CD4-positive, alpha-beta memory T cell (primary cell): ENCODE measurements at regions of chr3 and their contacts with region 1.

Region 1: GRCh38 chr3:130892759-130893375 is 1.0 kb upstream of the ATP2C1 start:
- DNase-seq: peak; percentile 75 to 80 (median 76)
- H3K4me3 ChIP-seq: peak overlapping the region; percentile 79 to 99
- H3K4me3 Mint-ChIP-seq: peak overlapping the region; percentile 95 to 99 (median 98)
- H3K27ac ChIP-seq: peak overlapping the region; percentile 99
- H3K27ac Mint-ChIP-seq: peak overlapping the region; percentile 99 to 100 (median 100)
- H3K4me1 ChIP-seq: peaks cover 29% of the 10 kb centered on the region
- H3K4me1 Mint-ChIP-seq: peaks cover 27 to 47% (median 32%) of the 10 kb centered on the region in 4 donors
- H3K27me3 ChIP-seq: no peaks in the 10 kb centered on the region
- H3K27me3 Mint-ChIP-seq: peaks cover 0 to 1% of the 10 kb centered on the region in 2 donors

Region 2: DNA sequence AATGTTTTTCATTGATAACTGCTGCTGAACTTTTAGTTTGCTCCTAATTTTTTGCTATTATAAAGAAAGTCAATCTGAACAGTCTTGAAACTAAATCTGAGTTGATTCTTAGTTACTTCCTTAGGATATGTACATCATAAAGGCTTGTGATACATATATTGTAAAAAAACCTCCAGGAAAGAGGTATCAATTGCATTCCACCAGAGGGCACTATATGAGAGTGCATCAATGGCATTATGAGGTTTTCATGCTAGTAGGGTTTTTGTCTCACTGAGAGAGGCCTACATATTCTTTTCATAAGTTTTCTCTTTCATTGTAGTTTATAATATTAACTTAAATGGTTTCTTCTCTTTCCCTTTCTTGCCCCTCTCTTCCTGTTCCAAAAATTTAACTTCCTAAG is 193.1 kb before region 1 on chr3:
- CTCF ChIA-PET with region 1: interaction called, 4 read pairs
- POLR2A ChIA-PET with region 1: no interaction called
- intact Hi-C with region 1: loop called (anchors 1 kb)
- DNase-seq: peak in 3 of 5 donors; percentile 2 to 11 (median 5)
- H3K4me3 ChIP-seq: no peak overlapping the region
- H3K4me3 Mint-ChIP-seq: no peak overlapping the region
- H3K27ac ChIP-seq: no peak overlapping the region
- H3K27ac Mint-ChIP-seq: no peak overlapping the region
- H3K4me1 ChIP-seq: no peaks in the 10 kb centered on the region
- H3K4me1 Mint-ChIP-seq: no peaks in the 10 kb centered on the region
- H3K27me3 ChIP-seq: no peaks in the 10 kb centered on the region
- H3K27me3 Mint-ChIP-seq: no peaks in the 10 kb centered on the region

Region 3: GRCh38 chr3:130759699-130760338 is 133.0 kb before region 1 on chr3:
- CTCF ChIA-PET with region 1: interaction called, 65 read pairs
- POLR2A ChIA-PET with region 1: interaction called, 7 read pairs
- intact Hi-C with region 1: loop called (anchors 1 kb)
- DNase-seq: peak; percentile 55 to 63 (median 58)
- H3K4me3 ChIP-seq: no peak overlapping the region
- H3K4me3 Mint-ChIP-seq: no peak overlapping the region
- H3K27ac ChIP-seq: no peak overlapping the region
- H3K27ac Mint-ChIP-seq: peak overlapping the region in 1 of 7 donors; percentile 65
- H3K4me1 ChIP-seq: no peaks in the 10 kb centered on the region
- H3K4me1 Mint-ChIP-seq: no peaks in the 10 kb centered on the region
- H3K27me3 ChIP-seq: no peaks in the 10 kb centered on the region
- H3K27me3 Mint-ChIP-seq: peaks cover 4 to 12% of the 10 kb centered on the region in 2 donors

Region 4: GRCh38 chr3:130779031-130779430 is 113.8 kb before region 1 on chr3:
- CTCF ChIA-PET with region 1: no interaction called
- POLR2A ChIA-PET with region 1: no interaction called
- intact Hi-C with region 1: no loop called
- DNase-seq: no peak
- H3K4me3 ChIP-seq: no peak overlapping the region
- H3K4me3 Mint-ChIP-seq: no peak overlapping the region
- H3K27ac ChIP-seq: no peak overlapping the region
- H3K27ac Mint-ChIP-seq: no peak overlapping the region
- H3K4me1 ChIP-seq: no peaks in the 10 kb centered on the region
- H3K4me1 Mint-ChIP-seq: no peaks in the 10 kb centered on the region
- H3K27me3 ChIP-seq: no peaks in the 10 kb centered on the region
- H3K27me3 Mint-ChIP-seq: peaks cover 6 to 7% of the 10 kb centered on the region in 2 donors

Region 5: GRCh38 chr3:131381444-131382291 is 488.8 kb after region 1 on chr3 and contains the start of gene NUDT16:
- CTCF ChIA-PET with region 1: interaction called, 5 read pairs
- POLR2A ChIA-PET with region 1: no interaction called
- intact Hi-C with region 1: loop called (anchors 5 kb)
- DNase-seq: peak; percentile 92 to 96 (median 94)
- H3K4me3 ChIP-seq: peak within 1 kb of the TSS; percentile 89 to 95
- H3K4me3 Mint-ChIP-seq: peak within 1 kb of the TSS; percentile 96 to 98 (median 96)
- H3K27ac ChIP-seq: peak within 1 kb of the TSS; percentile 61
- H3K27ac Mint-ChIP-seq: peak within 1 kb of the TSS; percentile 90 to 99 (median 96)
- H3K4me1 ChIP-seq: peaks cover 28% of the 10 kb centered on the region
- H3K4me1 Mint-ChIP-seq: peaks cover 33 to 43% (median 38%) of the 10 kb centered on the region in 4 donors
- H3K27me3 ChIP-seq: no peaks in the 10 kb centered on the region
- H3K27me3 Mint-ChIP-seq: no peaks in the 10 kb centered on the region
- total RNA-seq, gene NUDT16: 15.6 to 16.7 TPM

Region 6: DNA sequence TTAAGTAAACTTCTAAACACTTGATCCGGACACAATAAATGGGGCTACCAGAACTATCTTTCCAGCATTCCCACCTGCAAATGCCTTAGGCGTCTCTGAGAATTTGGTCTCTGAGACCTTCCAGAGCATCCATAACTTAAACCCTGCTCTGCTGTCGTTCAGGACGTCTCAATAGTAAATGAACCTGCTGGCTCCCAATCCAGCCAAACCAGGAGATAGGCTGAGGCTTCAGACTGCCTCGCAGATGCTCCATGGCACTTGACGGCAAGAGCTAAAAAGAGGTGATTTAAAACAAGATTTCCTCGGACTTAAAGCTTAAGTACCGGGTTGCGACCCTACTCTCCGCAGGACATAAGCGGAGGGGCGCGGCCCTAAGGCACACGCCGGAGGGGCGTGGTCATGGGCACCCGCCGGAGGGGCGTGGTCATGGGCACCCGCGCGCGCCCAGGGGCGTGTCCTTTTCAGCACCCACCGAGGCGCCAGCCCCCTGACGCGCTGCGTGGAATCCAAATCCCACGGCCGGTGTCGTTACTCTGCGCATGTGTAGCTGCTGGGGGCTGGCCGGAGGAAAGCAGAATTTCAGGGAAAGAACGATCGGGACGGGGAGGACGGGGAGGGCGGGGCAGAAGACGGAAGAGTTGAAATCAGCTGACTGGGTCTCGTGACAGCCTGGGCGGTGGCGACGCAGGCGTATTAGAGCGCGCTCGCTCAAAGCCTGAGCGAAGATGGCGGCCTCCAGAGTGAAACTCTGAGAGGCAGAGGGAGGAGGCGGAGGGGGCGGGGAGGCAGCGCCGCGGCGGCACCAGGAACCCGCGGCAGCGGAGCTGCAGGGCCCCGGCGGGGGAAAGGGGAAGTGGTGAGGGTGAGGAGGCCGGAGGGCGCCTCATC is 1524.2 kb after region 1 on chr3 and contains the start of gene DNAJC13:
- CTCF ChIA-PET with region 1: no interaction called
- POLR2A ChIA-PET with region 1: interaction called, 10 read pairs
- intact Hi-C with region 1: loop called (anchors 5 kb)
- DNase-seq: peak; percentile 91 to 95 (median 93)
- H3K4me3 ChIP-seq: peak within 1 kb of the TSS; percentile 84 to 89
- H3K4me3 Mint-ChIP-seq: peak within 1 kb of the TSS; percentile 96 to 100 (median 99)
- H3K27ac ChIP-seq: peak within 1 kb of the TSS; percentile 82
- H3K27ac Mint-ChIP-seq: peak within 1 kb of the TSS; percentile 95 to 99 (median 98)
- H3K4me1 ChIP-seq: peaks cover 23% of the 10 kb centered on the region
- H3K4me1 Mint-ChIP-seq: peaks cover 20 to 38% (median 26%) of the 10 kb centered on the region in 4 donors
- H3K27me3 ChIP-seq: no peaks in the 10 kb centered on the region
- H3K27me3 Mint-ChIP-seq: no peaks in the 10 kb centered on the region
- total RNA-seq, gene DNAJC13: 43.1 to 43.5 TPM